ENCODE measurements at regions of chr5 and their contacts with region 1.

Region 1: GRCh38 chr5:69217548-69218526 is 16.8 kb upstream of the CDK7 start:
- H3K4me3 Mint-ChIP-seq: peak overlapping the region; percentile 100
- H3K27ac Mint-ChIP-seq: peak overlapping the region; percentile 100
- H3K4me1 Mint-ChIP-seq: peaks cover 5% of the 10 kb centered on the region
- H3K27me3 Mint-ChIP-seq: no peaks in the 10 kb centered on the region

Region 2: DNA sequence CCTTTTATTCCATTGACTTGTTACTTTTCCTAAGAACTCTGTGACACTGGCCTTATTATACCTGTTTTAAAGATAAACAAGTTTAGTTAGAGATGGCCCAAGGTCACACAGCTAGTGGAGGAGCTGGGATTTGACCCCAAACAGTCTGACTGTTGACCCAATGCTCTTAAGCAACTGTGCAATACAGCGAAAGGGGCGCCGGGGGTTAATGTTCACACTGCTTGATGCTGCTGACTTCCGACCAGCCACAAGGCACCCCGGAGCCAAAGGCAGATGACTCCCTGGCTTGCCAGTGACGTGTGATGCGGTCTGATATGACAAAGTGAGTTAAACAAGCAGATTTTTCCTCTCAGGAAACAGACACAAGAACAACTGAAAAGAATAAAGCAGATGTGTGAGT is 978.4 kb before region 1 on chr5:
- intact Hi-C with region 1: no loop called
- H3K4me3 Mint-ChIP-seq: no peak overlapping the region
- H3K27ac Mint-ChIP-seq: peak overlapping the region; percentile 66
- H3K4me1 Mint-ChIP-seq: peaks cover 66% of the 10 kb centered on the region
- H3K27me3 Mint-ChIP-seq: no peaks in the 10 kb centered on the region

Region 3: GRCh38 chr5:69042915-69043658 is 174.8 kb before region 1 on chr5:
- intact Hi-C with region 1: no loop called
- H3K4me3 Mint-ChIP-seq: peak overlapping the region; percentile 71
- H3K27ac Mint-ChIP-seq: peak overlapping the region; percentile 60
- H3K4me1 Mint-ChIP-seq: peaks cover 9% of the 10 kb centered on the region
- H3K27me3 Mint-ChIP-seq: no peaks in the 10 kb centered on the region

Region 4: GRCh38 chr5:69189162-69190086 is 28.4 kb before region 1 on chr5 and contains the start of gene CENPH:
- intact Hi-C with region 1: loop called (anchors 1 kb)
- H3K4me3 Mint-ChIP-seq: peak within 1 kb of the TSS; percentile 91
- H3K27ac Mint-ChIP-seq: peak within 1 kb of the TSS; percentile 92
- H3K4me1 Mint-ChIP-seq: peaks cover 9% of the 10 kb centered on the region
- H3K27me3 Mint-ChIP-seq: no peaks in the 10 kb centered on the region

Region 5: GRCh38 chr5:69234457-69235268 is 16.8 kb after region 1 on chr5 and contains the start of gene CDK7:
- intact Hi-C with region 1: loop called (anchors 1 kb)
- H3K4me3 Mint-ChIP-seq: peak within 1 kb of the TSS; percentile 91
- H3K27ac Mint-ChIP-seq: peak within 1 kb of the TSS; percentile 88
- H3K4me1 Mint-ChIP-seq: peaks cover 32% of the 10 kb centered on the region
- H3K27me3 Mint-ChIP-seq: no peaks in the 10 kb centered on the region

Region 6: DNA sequence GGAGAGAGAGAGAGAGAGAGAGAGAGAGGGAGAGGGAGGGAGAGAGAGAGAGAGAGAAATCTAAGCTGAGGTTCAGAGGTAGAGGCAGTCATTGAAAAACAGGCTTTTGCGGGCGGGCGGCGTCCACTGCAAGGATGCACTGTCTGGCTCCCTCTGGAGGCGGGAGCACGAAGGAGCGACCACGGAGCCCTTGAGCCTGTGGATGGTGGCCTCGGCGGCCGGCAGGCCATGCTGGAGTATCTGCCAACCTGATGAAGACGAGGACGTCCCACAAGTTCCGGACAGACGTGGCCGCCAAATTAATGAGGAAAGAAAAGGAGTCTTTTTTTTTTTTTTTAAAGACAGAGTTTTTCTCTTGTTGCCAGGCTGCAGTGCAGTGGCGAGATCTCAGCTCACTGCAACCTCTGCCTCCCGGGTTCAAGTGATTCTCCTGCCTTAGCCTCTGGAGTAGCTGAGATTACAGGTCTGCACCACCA is 117.0 kb after region 1 on chr5:
- intact Hi-C with region 1: loop called (anchors 5 kb)
- H3K4me3 Mint-ChIP-seq: no peak overlapping the region
- H3K27ac Mint-ChIP-seq: no peak overlapping the region
- H3K4me1 Mint-ChIP-seq: peaks cover 16% of the 10 kb centered on the region
- H3K27me3 Mint-ChIP-seq: no peaks in the 10 kb centered on the region

Region 7: GRCh38 chr5:69369369-69370121 is 151.7 kb after region 1 on chr5 and contains the starts of genes AK6, RAD17 and TAF9:
- intact Hi-C with region 1: loop called (anchors 5 kb)
- H3K4me3 Mint-ChIP-seq: peak within 1 kb of the TSS; percentile 91
- H3K27ac Mint-ChIP-seq: peak within 1 kb of the TSS; percentile 96
- H3K4me1 Mint-ChIP-seq: peaks cover 14% of the 10 kb centered on the region
- H3K27me3 Mint-ChIP-seq: no peaks in the 10 kb centered on the region